ENCODE measurements at regions of chr7 and their contacts with region 1.

Region 1: GRCh38 chr7:110888641-110889040 is 202.3 kb upstream of the LRRN3 start:
- DNase-seq: no peak
- H3K4me3 Mint-ChIP-seq: no peak overlapping the region
- H3K27ac Mint-ChIP-seq: no peak overlapping the region
- H3K4me1 Mint-ChIP-seq: peaks cover 9% of the 10 kb centered on the region
- H3K27me3 Mint-ChIP-seq: no peaks in the 10 kb centered on the region

Region 2: GRCh38 chr7:110693344-110693743 is 195.3 kb before region 1 on chr7:
- intact Hi-C with region 1: no loop called
- DNase-seq: no peak
- H3K4me3 Mint-ChIP-seq: no peak overlapping the region
- H3K27ac Mint-ChIP-seq: no peak overlapping the region
- H3K4me1 Mint-ChIP-seq: no peaks in the 10 kb centered on the region
- H3K27me3 Mint-ChIP-seq: no peaks in the 10 kb centered on the region

Region 3: GRCh38 chr7:110943701-110944345 is 55.2 kb after region 1 on chr7:
- intact Hi-C with region 1: no loop called
- DNase-seq: no peak
- H3K4me3 Mint-ChIP-seq: no peak overlapping the region
- H3K27ac Mint-ChIP-seq: no peak overlapping the region
- H3K4me1 Mint-ChIP-seq: peaks cover 14% of the 10 kb centered on the region
- H3K27me3 Mint-ChIP-seq: no peaks in the 10 kb centered on the region

Region 4: DNA sequence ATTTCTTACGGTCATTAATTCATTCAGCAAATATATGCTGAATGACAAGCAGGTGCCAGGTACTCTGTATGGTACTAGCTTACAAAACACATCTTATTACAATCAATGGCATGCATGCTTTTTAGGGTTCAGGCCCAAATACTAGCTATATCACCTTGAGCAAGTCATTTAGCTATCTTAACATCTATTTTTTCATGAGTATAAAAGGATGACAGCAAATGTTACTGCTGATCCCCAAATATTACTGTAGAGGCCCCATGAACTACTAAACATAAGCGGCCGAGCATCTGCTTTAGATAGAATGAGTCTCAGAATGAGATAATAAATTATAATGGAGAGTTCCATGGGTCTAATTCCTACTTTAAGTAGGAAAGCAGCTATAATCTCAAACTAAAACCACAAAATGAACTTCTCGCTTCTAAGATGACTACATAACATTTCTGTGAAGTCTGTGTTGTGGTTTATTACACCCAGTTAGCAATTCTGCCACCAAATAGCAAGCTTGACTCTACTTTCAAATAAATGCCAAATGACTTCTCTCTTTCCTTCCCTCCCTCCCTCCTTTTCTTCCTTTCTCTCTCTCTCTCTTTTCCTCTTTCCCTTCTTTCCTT is 88.6 kb after region 1 on chr7:
- intact Hi-C with region 1: loop called (anchors 5 kb)
- DNase-seq: peak; percentile 62
- H3K4me3 Mint-ChIP-seq: peak overlapping the region; percentile 40
- H3K27ac Mint-ChIP-seq: peak overlapping the region; percentile 38
- H3K4me1 Mint-ChIP-seq: peaks cover 25% of the 10 kb centered on the region
- H3K27me3 Mint-ChIP-seq: no peaks in the 10 kb centered on the region

Measured in activated CD4-positive, alpha-beta T cell treated with anti-CD3 and anti-CD28 coated beads, Interleukin-2, amount 10 ng/mL, durations not matched to agents 24 days and 14 days (primary cell).